PC-9 (cell line): ENCODE measurements at regions of chr20 and their contacts with region 1.

Region 1: GRCh38 chr20:5967469-5967868 is 17.0 kb downstream of the MCM8 start:
- DNase-seq: no peak
- H3K4me3 ChIP-seq: no peak overlapping the region
- H3K27ac ChIP-seq: no peak overlapping the region
- H3K4me1 ChIP-seq: no peaks in the 10 kb centered on the region
- H3K27me3 ChIP-seq: no peaks in the 10 kb centered on the region
- CTCF ChIP-seq: no peak

Region 2: GRCh38 chr20:5886788-5887187 is 80.7 kb before region 1 on chr20:
- CTCF ChIA-PET with region 1: no interaction called
- POLR2A ChIA-PET with region 1: no interaction called
- intact Hi-C with region 1: no loop called
- DNase-seq: no peak
- H3K4me3 ChIP-seq: no peak overlapping the region
- H3K27ac ChIP-seq: no peak overlapping the region
- H3K4me1 ChIP-seq: no peaks in the 10 kb centered on the region
- H3K27me3 ChIP-seq: peaks cover 74% of the 10 kb centered on the region
- CTCF ChIP-seq: no peak

Region 3: DNA sequence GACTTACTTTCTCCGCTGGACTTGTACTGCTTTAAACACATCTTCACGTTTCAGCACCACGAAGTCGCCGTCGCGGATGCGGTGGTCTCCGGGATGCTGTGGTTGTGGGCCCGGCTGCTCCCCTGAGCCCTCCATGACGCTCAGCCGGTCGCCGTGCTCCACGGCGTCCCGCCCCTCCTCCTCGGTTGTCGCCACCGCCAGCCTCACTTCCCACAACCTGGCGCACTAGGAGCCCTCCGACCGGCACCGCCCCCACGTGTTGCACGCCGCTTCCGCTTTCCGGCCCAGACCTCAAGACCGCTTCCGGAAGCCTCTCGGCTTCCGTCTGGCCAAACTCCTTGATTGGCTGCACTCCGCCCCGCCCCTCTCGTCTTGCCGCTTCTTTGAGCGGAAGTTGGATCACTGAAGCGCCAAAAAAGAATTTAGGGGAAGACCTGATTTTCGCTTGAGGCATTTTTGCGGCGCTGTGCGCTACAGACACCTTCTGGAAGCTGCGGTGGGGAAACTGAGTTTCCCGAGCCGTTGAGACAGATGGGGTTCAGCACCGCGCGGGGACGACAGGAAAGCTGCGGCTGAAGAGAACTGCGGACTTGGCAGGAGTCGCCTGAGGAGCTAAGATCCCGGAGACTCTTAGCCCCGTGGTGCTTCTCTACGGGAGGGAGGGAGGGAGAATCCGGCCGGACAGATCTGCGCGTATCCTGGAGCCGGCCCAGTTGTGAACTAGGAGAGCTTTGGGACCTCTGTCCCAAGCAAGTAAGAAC is 17.0 kb before region 1 on chr20 and contains the starts of genes MCM8 and TRMT6:
- CTCF ChIA-PET with region 1: no interaction called
- POLR2A ChIA-PET with region 1: no interaction called
- intact Hi-C with region 1: no loop called
- DNase-seq: peak; percentile 95 to 96
- H3K4me3 ChIP-seq: peak within 1 kb of the TSS; percentile 97
- H3K27ac ChIP-seq: peak within 1 kb of the TSS; percentile 45; the same call in 1 of the 2 replicates
- H3K4me1 ChIP-seq: peaks cover 26% of the 10 kb centered on the region
- H3K27me3 ChIP-seq: no peaks in the 10 kb centered on the region
- CTCF ChIP-seq: no peak
- total RNA-seq, gene MCM8: 18.2 and 22.4 TPM in 2 replicates
- total RNA-seq, gene TRMT6: 12.2 and 16.2 TPM in 2 replicates

Region 4: GRCh38 chr20:6060213-6060612 is 92.7 kb after region 1 on chr20:
- CTCF ChIA-PET with region 1: interaction called, 11 read pairs
- POLR2A ChIA-PET with region 1: no interaction called
- intact Hi-C with region 1: no loop called
- DNase-seq: no peak
- H3K4me3 ChIP-seq: no peak overlapping the region
- H3K27ac ChIP-seq: no peak overlapping the region
- H3K4me1 ChIP-seq: peaks cover 11% of the 10 kb centered on the region
- H3K27me3 ChIP-seq: no peaks in the 10 kb centered on the region
- CTCF ChIP-seq: no peak